Naive thymus-derived CD4-positive, alpha-beta T cell (primary cell): ENCODE measurements at regions of chr9 and their contacts with region 1.

Region 1: DNA sequence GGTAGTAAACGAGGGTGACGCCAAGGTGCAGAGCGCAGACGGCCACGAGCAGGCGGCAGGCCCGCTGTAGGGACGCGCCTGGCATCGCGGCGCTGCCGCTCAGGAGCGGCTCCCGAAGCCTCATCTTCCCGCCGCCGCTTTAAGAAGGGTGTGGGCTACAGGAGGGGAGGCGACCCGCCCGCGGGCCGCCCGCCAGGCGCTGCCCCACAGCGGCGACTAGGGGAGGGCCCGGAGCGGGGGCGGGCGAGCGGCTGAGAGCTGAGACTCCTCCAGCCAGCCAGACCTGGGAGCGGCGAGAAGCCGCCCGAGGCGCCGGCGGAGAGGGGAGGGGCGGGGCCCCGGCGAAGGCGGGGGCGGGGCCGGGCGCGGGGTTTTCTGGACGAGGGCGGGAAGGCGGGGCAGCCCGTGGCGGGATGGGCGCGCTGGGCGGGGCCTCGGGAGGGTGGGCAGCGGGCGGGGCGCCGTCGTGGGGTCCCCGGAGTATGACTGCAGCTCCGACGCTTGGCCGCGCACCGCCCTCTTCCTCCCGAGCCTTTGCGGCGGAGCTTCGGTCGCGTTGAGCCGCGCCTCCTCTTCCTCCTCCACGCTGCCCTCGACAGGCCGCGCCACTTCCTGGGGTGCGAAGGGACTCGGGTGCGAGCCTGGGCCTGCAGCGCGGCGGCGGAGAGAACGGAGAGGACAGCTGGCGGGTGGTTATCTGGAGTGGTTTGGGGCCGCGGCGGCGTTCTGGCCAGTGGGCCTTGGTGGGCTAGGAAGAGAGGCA is at the start of gene B4GALT1:
- DNase-seq: peak; percentile 81 to 97 (median 90)
- ATAC-seq: peak; percentile 86
- H3K4me3 ChIP-seq: peak within 1 kb of the TSS; percentile 68
- H3K4me3 Mint-ChIP-seq: peak within 1 kb of the TSS; percentile 87 to 97 (median 95)
- H3K27ac ChIP-seq: peak within 1 kb of the TSS; percentile 91
- H3K27ac Mint-ChIP-seq: peak within 1 kb of the TSS; percentile 91 to 100 (median 99)
- H3K4me1 ChIP-seq: peaks cover 43 to 45% of the 10 kb centered on the region in 2 donors
- H3K4me1 Mint-ChIP-seq: peaks cover 47 to 69% (median 64%) of the 10 kb centered on the region in 7 donors
- H3K27me3 ChIP-seq: no peaks in the 10 kb centered on the region
- H3K27me3 Mint-ChIP-seq: no peaks in the 10 kb centered on the region
- total RNA-seq, gene B4GALT1: 40.7 to 86.2 (median 45.6) TPM

Region 2: GRCh38 chr9:31347082-31347617 is 1820.1 kb before region 1 on chr9:
- CTCF ChIA-PET with region 1: no interaction called
- POLR2A ChIA-PET with region 1: no interaction called
- intact Hi-C with region 1: loop called in 1 of 2 experiments (anchors 10 kb)
- DNase-seq: peak in 7 of 9 donors; percentile 58 to 81 (median 72)
- ATAC-seq: peak; percentile 97
- H3K4me3 ChIP-seq: peak overlapping the region; percentile 36
- H3K4me3 Mint-ChIP-seq: peak overlapping the region; percentile 63 to 82 (median 72)
- H3K27ac ChIP-seq: peak overlapping the region; percentile 77
- H3K27ac Mint-ChIP-seq: peak overlapping the region; percentile 93 to 98 (median 96)
- H3K4me1 ChIP-seq: peaks cover 25 to 26% of the 10 kb centered on the region in 2 donors
- H3K4me1 Mint-ChIP-seq: peaks cover 8 to 73% (median 58%) of the 10 kb centered on the region in 7 donors
- H3K27me3 ChIP-seq: no peaks in the 10 kb centered on the region
- H3K27me3 Mint-ChIP-seq: no peaks in the 10 kb centered on the region

Region 3: DNA sequence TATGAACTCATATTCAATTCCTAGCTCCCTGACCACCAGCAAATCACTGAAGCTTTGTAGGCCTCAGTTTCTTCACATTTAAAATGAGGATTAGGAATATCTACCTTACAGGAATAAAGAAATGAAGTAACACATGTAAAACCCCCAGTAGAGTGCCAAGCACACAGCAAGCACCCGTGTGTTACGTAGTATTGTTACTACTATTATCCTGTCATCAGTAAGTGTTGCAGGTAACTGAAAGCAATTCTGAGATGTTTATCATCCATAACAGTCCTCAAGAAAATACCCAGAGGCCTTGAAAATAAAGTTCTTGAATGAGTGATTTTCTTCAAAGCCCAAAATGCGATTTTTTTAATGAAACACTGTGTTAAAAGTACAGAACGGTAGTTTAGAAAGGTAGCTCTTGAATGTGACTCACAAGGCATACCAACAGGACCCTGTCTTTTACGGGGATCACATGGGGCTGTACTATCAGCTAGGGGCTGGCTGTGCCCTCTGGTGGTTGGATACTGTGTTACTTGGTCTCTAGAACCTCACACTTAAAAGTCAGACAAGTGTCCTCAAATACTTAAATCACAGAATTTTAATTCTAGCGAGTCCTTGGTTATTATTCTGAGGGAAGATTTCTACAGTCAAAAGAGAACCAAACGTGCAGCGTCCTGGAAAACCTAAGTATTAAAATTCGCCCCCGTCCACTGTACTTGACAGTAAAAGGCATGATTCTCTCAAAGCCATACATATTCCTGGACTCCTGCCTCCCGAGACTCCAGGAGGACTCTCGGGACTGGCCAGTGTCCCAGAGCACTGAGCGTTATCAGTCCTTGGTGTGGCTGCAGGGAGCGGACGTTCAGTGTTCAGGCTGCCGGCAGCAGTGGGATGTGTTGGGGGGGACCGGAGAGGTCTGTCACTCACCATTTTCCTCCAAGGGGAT is 595.0 kb before region 1 on chr9:
- CTCF ChIA-PET with region 1: no interaction called
- POLR2A ChIA-PET with region 1: no interaction called
- intact Hi-C with region 1: loop called in 1 of 2 experiments (anchors 5 kb)
- DNase-seq: peak; percentile 33 to 85 (median 77)
- ATAC-seq: peak; percentile 92
- H3K4me3 ChIP-seq: peak overlapping the region; percentile 92
- H3K4me3 Mint-ChIP-seq: peak overlapping the region; percentile 98 to 100 (median 99)
- H3K27ac ChIP-seq: peak overlapping the region; percentile 86
- H3K27ac Mint-ChIP-seq: peak overlapping the region; percentile 93 to 99 (median 99)
- H3K4me1 ChIP-seq: peaks cover 14 to 22% of the 10 kb centered on the region in 2 donors
- H3K4me1 Mint-ChIP-seq: peaks cover 18 to 43% (median 30%) of the 10 kb centered on the region in 7 donors
- H3K27me3 ChIP-seq: no peaks in the 10 kb centered on the region
- H3K27me3 Mint-ChIP-seq: peaks cover 0 to 10% (median 0%) of the 10 kb centered on the region in 5 donors

Region 4: GRCh38 chr9:33076358-33077004 is 90.7 kb before region 1 on chr9 and contains the start of gene SMU1:
- CTCF ChIA-PET with region 1: interaction called, 6 read pairs
- POLR2A ChIA-PET with region 1: interaction called, 11 read pairs
- intact Hi-C with region 1: loop called (anchors 1 kb)
- DNase-seq: peak; percentile 82 to 97 (median 95)
- ATAC-seq: peak; percentile 97
- H3K4me3 ChIP-seq: peak within 1 kb of the TSS; percentile 82
- H3K4me3 Mint-ChIP-seq: peak within 1 kb of the TSS; percentile 95 to 100 (median 98)
- H3K27ac ChIP-seq: peak within 1 kb of the TSS; percentile 93
- H3K27ac Mint-ChIP-seq: peak within 1 kb of the TSS; percentile 97 to 100 (median 99)
- H3K4me1 ChIP-seq: peaks cover 16 to 21% of the 10 kb centered on the region in 2 donors
- H3K4me1 Mint-ChIP-seq: peaks cover 17 to 61% (median 48%) of the 10 kb centered on the region in 7 donors
- H3K27me3 ChIP-seq: no peaks in the 10 kb centered on the region
- H3K27me3 Mint-ChIP-seq: no peaks in the 10 kb centered on the region
- total RNA-seq, gene SMU1: 22.3 to 32.9 (median 25.6) TPM

Region 5: GRCh38 chr9:33139421-33140228 is 27.6 kb before region 1 on chr9:
- CTCF ChIA-PET with region 1: interaction called, 7 read pairs
- POLR2A ChIA-PET with region 1: interaction called, 92 read pairs
- intact Hi-C with region 1: loop called in 1 of 2 experiments (anchors 1 kb)
- DNase-seq: no peak
- ATAC-seq: no peak
- H3K4me3 ChIP-seq: no peak overlapping the region
- H3K4me3 Mint-ChIP-seq: peak overlapping the region in 9 of 10 donors; percentile 3 to 69 (median 32)
- H3K27ac ChIP-seq: no peak overlapping the region
- H3K27ac Mint-ChIP-seq: peak overlapping the region; percentile 53 to 98 (median 84)
- H3K4me1 ChIP-seq: peaks cover 72 to 92% of the 10 kb centered on the region in 2 donors
- H3K4me1 Mint-ChIP-seq: peaks cover 76 to 95% (median 85%) of the 10 kb centered on the region in 7 donors
- H3K27me3 ChIP-seq: no peaks in the 10 kb centered on the region
- H3K27me3 Mint-ChIP-seq: no peaks in the 10 kb centered on the region

Region 6: GRCh38 chr9:33264473-33265177 is 97.4 kb after region 1 on chr9 and contains the starts of genes BAG1 and CHMP5:
- CTCF ChIA-PET with region 1: no interaction called
- POLR2A ChIA-PET with region 1: interaction called, 3 read pairs
- intact Hi-C with region 1: loop called (anchors 1 kb)
- DNase-seq: peak; percentile 98 to 100 (median 100)
- ATAC-seq: peak; percentile 99
- H3K4me3 ChIP-seq: peak within 1 kb of the TSS; percentile 95
- H3K4me3 Mint-ChIP-seq: peak within 1 kb of the TSS; percentile 82 to 98 (median 92)
- H3K27ac ChIP-seq: peak within 1 kb of the TSS; percentile 88
- H3K27ac Mint-ChIP-seq: peak within 1 kb of the TSS; percentile 84 to 99 (median 97)
- H3K4me1 ChIP-seq: peaks cover 15 to 34% of the 10 kb centered on the region in 2 donors
- H3K4me1 Mint-ChIP-seq: peaks cover 36 to 66% (median 55%) of the 10 kb centered on the region in 7 donors
- H3K27me3 ChIP-seq: no peaks in the 10 kb centered on the region
- H3K27me3 Mint-ChIP-seq: peaks cover 0 to 2% (median 0%) of the 10 kb centered on the region in 5 donors
- total RNA-seq, gene BAG1: 48.6 to 77.2 (median 61.0) TPM
- total RNA-seq, gene CHMP5: 21.4 to 74.6 (median 35.3) TPM

Region 7: GRCh38 chr9:34665381-34666250 is 1498.4 kb after region 1 on chr9:
- CTCF ChIA-PET with region 1: no interaction called
- POLR2A ChIA-PET with region 1: no interaction called
- intact Hi-C with region 1: loop called in 1 of 2 experiments (anchors 10 kb)
- DNase-seq: peak; percentile 74 to 90 (median 84)
- ATAC-seq: peak; percentile 90
- H3K4me3 ChIP-seq: peak overlapping the region; percentile 99
- H3K4me3 Mint-ChIP-seq: peak overlapping the region; percentile 89 to 97 (median 94)
- H3K27ac ChIP-seq: peak overlapping the region; percentile 98
- H3K27ac Mint-ChIP-seq: peak overlapping the region; percentile 86 to 98 (median 97)
- H3K4me1 ChIP-seq: peaks cover 33 to 40% of the 10 kb centered on the region in 2 donors
- H3K4me1 Mint-ChIP-seq: peaks cover 37 to 58% (median 50%) of the 10 kb centered on the region in 7 donors
- H3K27me3 ChIP-seq: no peaks in the 10 kb centered on the region
- H3K27me3 Mint-ChIP-seq: no peaks in the 10 kb centered on the region